CD4-positive, alpha-beta T cell (primary cell): ENCODE measurements at regions of chr5 and their contacts with region 1.

Region 1: GRCh38 chr5:154857530-154858296 is 714 bp upstream of the CNOT8 start:
- DNase-seq: peak; percentile 77 to 96 (median 86)
- ATAC-seq: peak; percentile 53
- H3K4me3 ChIP-seq: peak overlapping the region; percentile 73
- H3K4me3 Mint-ChIP-seq: peak overlapping the region; percentile 92
- H3K27ac ChIP-seq: peak overlapping the region; percentile 96 to 98
- H3K27ac Mint-ChIP-seq: peak overlapping the region; percentile 98
- H3K4me1 ChIP-seq: peaks cover 28% of the 10 kb centered on the region
- H3K4me1 Mint-ChIP-seq: peaks cover 46% of the 10 kb centered on the region
- H3K27me3 ChIP-seq: no peaks in the 10 kb centered on the region
- H3K27me3 Mint-ChIP-seq: no peaks in the 10 kb centered on the region
- CTCF ChIP-seq: no peak

Region 2: DNA sequence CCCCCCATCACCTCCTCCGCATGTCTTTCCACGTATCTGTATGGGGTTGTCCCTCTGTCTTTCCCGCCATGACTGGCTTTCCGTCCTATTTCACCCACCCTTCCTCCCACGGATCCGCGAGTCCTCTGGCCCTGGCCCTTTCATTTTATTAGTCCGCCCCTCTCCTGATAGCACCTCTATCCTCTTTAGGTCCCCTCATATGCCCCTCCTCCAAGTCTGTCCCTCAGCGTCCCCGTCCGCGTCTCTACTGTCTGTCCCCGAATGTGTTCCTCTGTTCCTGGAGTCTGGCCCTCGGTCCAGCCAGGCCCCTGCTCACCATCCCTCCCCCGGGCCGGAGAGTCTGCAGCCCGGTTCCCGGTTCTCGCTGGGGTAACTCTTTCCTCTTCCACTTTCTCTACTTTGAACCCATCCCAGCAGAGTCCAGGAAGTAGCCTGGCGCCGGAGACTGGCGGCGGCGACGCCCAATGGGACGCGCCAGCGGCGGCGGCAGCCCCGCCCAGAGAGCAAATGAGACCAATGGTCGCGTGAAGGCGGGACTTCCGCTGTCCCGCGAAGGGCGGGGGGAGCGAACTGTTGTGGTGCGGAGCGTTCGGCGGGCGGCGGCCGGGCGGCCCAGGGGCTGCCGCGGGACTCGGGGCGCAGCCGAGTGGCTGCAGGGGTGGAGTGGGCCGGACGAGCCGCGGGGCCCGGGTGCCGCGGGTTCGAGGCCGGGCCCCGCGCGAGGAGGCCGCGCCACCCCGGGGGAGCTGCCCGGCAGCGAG is 412.1 kb before region 1 on chr5 and contains the start of gene SAP30L:
- CTCF ChIA-PET with region 1: no interaction called
- POLR2A ChIA-PET with region 1: no interaction called
- intact Hi-C with region 1: loop called (anchors 5 to 10 kb)
- DNase-seq: peak; percentile 90 to 97 (median 94)
- ATAC-seq: peak; percentile 94
- H3K4me3 ChIP-seq: peak within 1 kb of the TSS; percentile 79
- H3K4me3 Mint-ChIP-seq: peak within 1 kb of the TSS; percentile 97
- H3K27ac ChIP-seq: peak within 1 kb of the TSS; percentile 42 to 73
- H3K27ac Mint-ChIP-seq: peak within 1 kb of the TSS; percentile 89
- H3K4me1 ChIP-seq: peaks cover 38% of the 10 kb centered on the region
- H3K4me1 Mint-ChIP-seq: peaks cover 69% of the 10 kb centered on the region
- H3K27me3 ChIP-seq: no peaks in the 10 kb centered on the region
- H3K27me3 Mint-ChIP-seq: no peaks in the 10 kb centered on the region
- CTCF ChIP-seq: no peak
- total RNA-seq, gene SAP30L: 32.2 to 33.6 TPM

Region 3: GRCh38 chr5:154683101-154683880 is 174.4 kb before region 1 on chr5:
- CTCF ChIA-PET with region 1: no interaction called
- POLR2A ChIA-PET with region 1: interaction called, 3 read pairs
- intact Hi-C with region 1: loop called in 1 of 2 experiments (anchors 5 kb)
- DNase-seq: peak in 1 of 14 experiments; percentile 23
- ATAC-seq: peak; percentile 31
- H3K4me3 ChIP-seq: peak overlapping the region; percentile 67
- H3K4me3 Mint-ChIP-seq: peak overlapping the region; percentile 32
- H3K27ac ChIP-seq: no peak overlapping the region
- H3K27ac Mint-ChIP-seq: no peak overlapping the region
- H3K4me1 ChIP-seq: peaks cover 17% of the 10 kb centered on the region
- H3K4me1 Mint-ChIP-seq: peaks cover 8% of the 10 kb centered on the region
- H3K27me3 ChIP-seq: peaks cover 0 to 5% of the 10 kb centered on the region in 2 experiments
- H3K27me3 Mint-ChIP-seq: no peaks in the 10 kb centered on the region
- CTCF ChIP-seq: no peak

Region 4: DNA sequence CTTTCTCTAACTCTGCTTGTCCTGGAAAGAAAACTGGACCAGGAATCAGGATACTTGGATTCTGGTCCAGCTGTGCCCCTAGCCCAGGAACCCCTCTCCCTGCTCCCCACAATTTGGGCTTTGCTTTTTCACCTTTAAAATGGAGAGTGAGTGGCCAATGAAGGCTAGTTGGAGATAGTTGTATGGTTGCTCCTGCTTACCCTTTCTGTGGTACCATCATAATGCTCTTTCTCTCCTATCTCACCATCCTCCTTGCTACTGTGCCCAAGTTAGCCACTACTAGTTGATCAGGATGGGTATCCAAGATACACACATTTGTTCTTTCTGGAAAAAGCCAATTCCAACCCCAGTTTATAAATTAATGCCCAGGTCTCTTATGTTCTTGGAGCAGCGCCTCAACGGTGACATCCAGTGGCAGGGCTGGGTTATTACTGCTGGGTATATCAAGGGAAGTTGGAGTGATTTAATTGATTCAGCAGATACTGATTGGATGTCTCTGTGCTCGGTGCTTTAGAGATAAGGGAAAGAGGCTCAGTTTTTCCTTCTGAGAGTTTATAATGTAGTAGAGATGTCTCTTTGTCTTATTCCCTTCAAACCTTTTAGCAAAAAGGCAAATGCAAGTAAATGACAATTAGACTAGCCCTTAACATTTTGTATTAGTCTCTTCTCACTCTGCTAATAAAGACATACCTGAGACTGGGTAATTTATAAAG is 45.9 kb before region 1 on chr5:
- CTCF ChIA-PET with region 1: no interaction called
- POLR2A ChIA-PET with region 1: interaction called, 7 read pairs
- intact Hi-C with region 1: loop called (anchors 5 kb)
- DNase-seq: peak; percentile 50 to 82 (median 62)
- ATAC-seq: peak; percentile 83
- H3K4me3 ChIP-seq: no peak overlapping the region
- H3K4me3 Mint-ChIP-seq: no peak overlapping the region
- H3K27ac ChIP-seq: no peak overlapping the region
- H3K27ac Mint-ChIP-seq: peak overlapping the region; percentile 38
- H3K4me1 ChIP-seq: peaks cover 28% of the 10 kb centered on the region
- H3K4me1 Mint-ChIP-seq: peaks cover 40% of the 10 kb centered on the region
- H3K27me3 ChIP-seq: no peaks in the 10 kb centered on the region
- H3K27me3 Mint-ChIP-seq: no peaks in the 10 kb centered on the region
- CTCF ChIP-seq: peak; percentile 94

Region 5: DNA sequence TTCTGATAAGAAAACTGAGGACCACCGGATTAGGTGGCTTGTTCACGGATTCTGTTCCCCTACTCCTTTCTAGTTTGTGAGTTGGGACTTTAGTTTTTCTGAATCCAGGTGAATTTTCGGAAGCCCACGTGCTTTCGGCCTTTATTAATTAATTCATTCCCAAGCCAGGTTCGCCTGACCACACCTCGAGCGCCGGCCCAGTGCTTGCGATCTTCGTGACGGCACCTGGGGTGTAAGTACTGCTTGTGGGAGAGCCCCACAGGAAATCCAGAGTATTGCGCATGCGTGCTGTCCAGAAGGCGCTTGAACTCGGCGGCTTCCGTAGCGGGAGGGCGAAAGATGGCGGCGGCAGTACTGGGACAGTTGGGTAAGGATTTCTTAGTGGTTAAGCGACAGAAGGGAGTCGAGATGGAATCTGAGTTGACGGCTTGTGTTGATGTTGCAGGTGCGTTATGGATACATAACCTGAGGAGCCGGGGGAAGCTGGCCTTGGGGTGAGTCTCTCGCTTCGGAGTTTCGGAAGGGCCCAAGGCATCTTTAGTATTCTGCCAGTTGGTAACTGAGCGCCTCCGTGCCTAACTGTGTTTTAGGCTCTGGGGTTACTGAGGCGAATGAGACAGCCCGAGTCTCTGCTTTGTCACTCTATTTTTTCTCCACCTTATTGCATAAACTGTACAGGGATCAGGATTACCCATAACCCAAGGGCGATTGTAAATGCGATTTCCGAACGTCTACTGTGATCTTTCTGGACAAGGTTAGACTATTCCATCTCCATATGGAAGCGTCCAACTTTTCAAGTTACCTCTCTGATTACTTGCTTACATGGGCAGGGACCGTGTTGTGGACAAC is 83.3 kb after region 1 on chr5 and contains the start of gene MRPL22:
- CTCF ChIA-PET with region 1: no interaction called
- POLR2A ChIA-PET with region 1: interaction called, 6 read pairs
- intact Hi-C with region 1: loop called (anchors 2 kb)
- DNase-seq: peak; percentile 89 to 98 (median 94)
- ATAC-seq: peak; percentile 79
- H3K4me3 ChIP-seq: peak within 1 kb of the TSS; percentile 94
- H3K4me3 Mint-ChIP-seq: peak within 1 kb of the TSS; percentile 99
- H3K27ac ChIP-seq: peak within 1 kb of the TSS; percentile 68 to 75
- H3K27ac Mint-ChIP-seq: peak within 1 kb of the TSS; percentile 97
- H3K4me1 ChIP-seq: peaks cover 44% of the 10 kb centered on the region
- H3K4me1 Mint-ChIP-seq: peaks cover 52% of the 10 kb centered on the region
- H3K27me3 ChIP-seq: no peaks in the 10 kb centered on the region
- H3K27me3 Mint-ChIP-seq: no peaks in the 10 kb centered on the region
- CTCF ChIP-seq: no peak
- total RNA-seq, gene MRPL22: 29.9 to 30.2 TPM

Region 6: GRCh38 chr5:155389498-155389897 is 531.8 kb after region 1 on chr5:
- CTCF ChIA-PET with region 1: no interaction called
- POLR2A ChIA-PET with region 1: no interaction called
- intact Hi-C with region 1: no loop called
- DNase-seq: no peak
- ATAC-seq: no peak
- H3K4me3 ChIP-seq: no peak overlapping the region
- H3K4me3 Mint-ChIP-seq: no peak overlapping the region
- H3K27ac ChIP-seq: no peak overlapping the region
- H3K27ac Mint-ChIP-seq: no peak overlapping the region
- H3K4me1 ChIP-seq: no peaks in the 10 kb centered on the region
- H3K4me1 Mint-ChIP-seq: no peaks in the 10 kb centered on the region
- H3K27me3 ChIP-seq: no peaks in the 10 kb centered on the region
- H3K27me3 Mint-ChIP-seq: peaks cover 3% of the 10 kb centered on the region
- CTCF ChIP-seq: no peak